Activated naive CD4-positive, alpha-beta T cell treated with anti-CD3 and anti-CD28 coated beads for 36 hours (primary cell): ENCODE measurements at regions of chr14 and their contacts with region 1.

Region 1: GRCh38 chr14:78598041-78598920 is 428.1 kb downstream of the NRXN3 start:
- DNase-seq: peak; percentile 69
- H3K4me3 Mint-ChIP-seq: no peak overlapping the region
- H3K27ac Mint-ChIP-seq: no peak overlapping the region
- H3K4me1 Mint-ChIP-seq: no peaks in the 10 kb centered on the region
- H3K27me3 Mint-ChIP-seq: peaks cover 20% of the 10 kb centered on the region

Region 2: DNA sequence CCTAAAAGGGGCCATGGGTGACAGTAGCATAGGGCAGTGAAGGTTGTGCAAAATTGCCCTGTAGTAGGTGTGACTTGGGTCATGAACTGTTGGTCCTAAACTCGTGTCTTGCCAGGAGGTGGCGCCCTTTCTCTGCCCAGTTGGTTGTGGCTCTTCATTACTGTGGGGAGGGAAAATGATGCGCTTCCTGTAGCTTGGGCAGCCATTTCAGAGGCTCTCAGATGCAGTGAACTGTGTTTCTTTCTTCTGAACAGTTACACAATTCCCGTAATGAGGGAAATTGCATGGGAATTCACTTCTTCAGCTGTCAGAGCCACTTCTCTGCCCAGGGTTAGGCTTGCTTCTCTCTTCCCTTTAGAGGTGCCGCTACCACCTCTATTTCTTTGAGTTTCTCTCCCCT is 576.2 kb before region 1 on chr14:
- CTCF ChIA-PET with region 1: interaction called, 4 read pairs
- intact Hi-C with region 1: loop called (anchors 1 kb)
- DNase-seq: peak; percentile 79
- H3K4me3 Mint-ChIP-seq: no peak overlapping the region
- H3K27ac Mint-ChIP-seq: no peak overlapping the region
- H3K4me1 Mint-ChIP-seq: no peaks in the 10 kb centered on the region
- H3K27me3 Mint-ChIP-seq: peaks cover 12% of the 10 kb centered on the region

Region 3: GRCh38 chr14:78383060-78383459 is 215.2 kb before region 1 on chr14:
- CTCF ChIA-PET with region 1: no interaction called
- intact Hi-C with region 1: no loop called
- DNase-seq: no peak
- H3K4me3 Mint-ChIP-seq: no peak overlapping the region
- H3K27ac Mint-ChIP-seq: no peak overlapping the region
- H3K4me1 Mint-ChIP-seq: no peaks in the 10 kb centered on the region
- H3K27me3 Mint-ChIP-seq: no peaks in the 10 kb centered on the region

Region 4: GRCh38 chr14:78644824-78645559 is 46.7 kb after region 1 on chr14:
- CTCF ChIA-PET with region 1: no interaction called
- intact Hi-C with region 1: no loop called
- DNase-seq: no peak
- H3K4me3 Mint-ChIP-seq: no peak overlapping the region
- H3K27ac Mint-ChIP-seq: no peak overlapping the region
- H3K4me1 Mint-ChIP-seq: no peaks in the 10 kb centered on the region
- H3K27me3 Mint-ChIP-seq: peaks cover 5% of the 10 kb centered on the region

Region 5: GRCh38 chr14:78790271-78790670 is 192.0 kb after region 1 on chr14:
- CTCF ChIA-PET with region 1: no interaction called
- intact Hi-C with region 1: no loop called
- DNase-seq: no peak
- H3K4me3 Mint-ChIP-seq: no peak overlapping the region
- H3K27ac Mint-ChIP-seq: no peak overlapping the region
- H3K4me1 Mint-ChIP-seq: no peaks in the 10 kb centered on the region
- H3K27me3 Mint-ChIP-seq: peaks cover 2% of the 10 kb centered on the region

Region 6: DNA sequence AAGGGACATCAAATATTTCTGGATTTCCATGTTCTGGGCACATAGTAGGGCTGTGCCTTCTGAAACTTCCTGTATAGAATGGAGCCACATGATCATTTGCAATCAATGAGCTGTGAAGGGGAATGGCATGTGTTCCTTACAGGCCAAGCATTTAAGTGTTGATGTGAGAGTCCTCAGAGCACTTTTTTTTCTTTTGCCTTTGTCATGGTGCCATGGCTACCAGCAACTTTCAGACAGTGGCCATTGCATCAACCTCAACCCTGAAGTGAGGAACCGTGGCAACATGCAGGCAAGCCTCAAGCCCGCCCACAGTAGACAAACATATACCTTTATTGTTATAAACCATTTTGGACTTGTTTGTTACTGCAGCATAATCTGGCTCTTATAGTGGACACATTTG is 520.0 kb after region 1 on chr14:
- CTCF ChIA-PET with region 1: no interaction called
- intact Hi-C with region 1: no loop called
- DNase-seq: no peak
- H3K4me3 Mint-ChIP-seq: no peak overlapping the region
- H3K27ac Mint-ChIP-seq: no peak overlapping the region
- H3K4me1 Mint-ChIP-seq: no peaks in the 10 kb centered on the region
- H3K27me3 Mint-ChIP-seq: no peaks in the 10 kb centered on the region